ENCODE measurements at regions of chr17 and their contacts with region 1.

Region 1: GRCh38 chr17:21284319-21285163 is at the start of gene MAP2K3:
- DNase-seq: peak; percentile 99
- H3K4me3 ChIP-seq: peak within 1 kb of the TSS; percentile 79
- H3K4me1 ChIP-seq: peaks cover 10% of the 10 kb centered on the region
- H3K27me3 ChIP-seq: no peaks in the 10 kb centered on the region

Region 2: DNA sequence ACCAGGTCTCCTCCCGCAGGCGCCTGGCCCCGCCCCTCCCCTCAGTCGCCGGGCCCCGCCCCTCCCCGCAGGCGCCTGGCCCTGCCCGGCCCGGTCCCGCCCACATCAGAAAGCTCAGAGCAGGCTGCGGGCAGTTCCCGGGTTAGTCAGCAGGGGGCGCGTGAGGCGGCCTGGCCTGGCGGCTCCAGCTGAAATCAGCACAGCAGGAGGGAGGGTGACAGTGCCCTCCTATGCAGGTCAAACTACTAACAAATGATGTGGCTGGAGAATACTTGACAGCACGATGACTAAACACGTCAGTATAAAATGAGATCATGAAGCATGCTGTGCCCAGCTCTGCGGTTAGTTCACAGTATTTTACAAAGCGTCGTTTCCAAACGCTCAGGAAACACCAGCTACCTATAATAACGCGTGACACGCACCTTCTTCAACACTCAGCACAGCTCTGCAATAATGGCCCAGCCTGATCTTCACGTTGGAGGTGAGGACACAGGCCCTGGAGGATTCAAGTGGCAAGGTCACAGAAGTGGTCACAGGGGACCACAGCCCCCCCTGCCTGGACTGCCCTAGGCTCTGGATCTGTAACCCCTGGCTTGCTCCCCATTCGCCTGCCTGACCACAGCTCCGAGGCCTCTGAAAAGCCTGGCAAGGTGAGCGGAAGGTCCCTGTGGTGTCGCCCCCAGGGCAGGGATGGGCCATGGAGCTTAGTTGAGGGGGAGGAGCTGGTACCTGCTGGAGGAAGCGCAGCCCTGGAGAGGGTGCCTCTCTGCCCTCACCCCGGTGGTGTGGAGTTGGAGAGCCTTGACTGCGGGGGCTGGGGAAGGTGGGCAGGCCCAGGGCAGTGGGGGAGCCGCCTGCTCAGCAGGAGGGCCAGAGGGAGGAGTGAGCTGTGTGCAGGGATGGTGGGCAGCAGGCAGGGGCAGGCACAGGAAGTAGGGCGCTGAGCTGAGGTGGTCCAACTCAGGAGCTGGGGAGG is 172.8 kb after region 1 on chr17:
- in situ Hi-C with region 1: loop called (anchors 10 kb)
- DNase-seq: peak; percentile 66 to 95
- H3K4me3 ChIP-seq: no peak overlapping the region
- H3K4me1 ChIP-seq: no peaks in the 10 kb centered on the region
- H3K27me3 ChIP-seq: no peaks in the 10 kb centered on the region

Region 3: GRCh38 chr17:21511363-21512198 is 227.0 kb after region 1 on chr17:
- in situ Hi-C with region 1: loop called (anchors 5 kb)
- DNase-seq: peak; percentile 51 to 85
- H3K4me3 ChIP-seq: 0 out of 2 replicates have a peak overlapping the region, but pooled peaks have one; percentile 6
- H3K4me1 ChIP-seq: peaks cover 3% of the 10 kb centered on the region
- H3K27me3 ChIP-seq: no peaks in the 10 kb centered on the region

Measured in HAP-1 (cell line).